ENCODE measurements at regions of chr12 and their contacts with region 1.

Region 1: GRCh38 chr12:52050761-52051541 is at the start of gene NR4A1:
- DNase-seq: peak; percentile 96
- H3K4me3 ChIP-seq: peak within 1 kb of the TSS; percentile 32 to 46 (median 44)
- H3K27ac ChIP-seq: peak within 1 kb of the TSS; percentile 85
- H3K4me1 ChIP-seq: peaks cover 20% of the 10 kb centered on the region
- H3K27me3 ChIP-seq: no peaks in the 10 kb centered on the region
- CTCF ChIP-seq: peak; percentile 5 to 10
- POLR2A ChIP-seq: no peak
- total RNA-seq, gene NR4A1: 6.8 and 10.2 TPM in 2 replicates

Region 2: DNA sequence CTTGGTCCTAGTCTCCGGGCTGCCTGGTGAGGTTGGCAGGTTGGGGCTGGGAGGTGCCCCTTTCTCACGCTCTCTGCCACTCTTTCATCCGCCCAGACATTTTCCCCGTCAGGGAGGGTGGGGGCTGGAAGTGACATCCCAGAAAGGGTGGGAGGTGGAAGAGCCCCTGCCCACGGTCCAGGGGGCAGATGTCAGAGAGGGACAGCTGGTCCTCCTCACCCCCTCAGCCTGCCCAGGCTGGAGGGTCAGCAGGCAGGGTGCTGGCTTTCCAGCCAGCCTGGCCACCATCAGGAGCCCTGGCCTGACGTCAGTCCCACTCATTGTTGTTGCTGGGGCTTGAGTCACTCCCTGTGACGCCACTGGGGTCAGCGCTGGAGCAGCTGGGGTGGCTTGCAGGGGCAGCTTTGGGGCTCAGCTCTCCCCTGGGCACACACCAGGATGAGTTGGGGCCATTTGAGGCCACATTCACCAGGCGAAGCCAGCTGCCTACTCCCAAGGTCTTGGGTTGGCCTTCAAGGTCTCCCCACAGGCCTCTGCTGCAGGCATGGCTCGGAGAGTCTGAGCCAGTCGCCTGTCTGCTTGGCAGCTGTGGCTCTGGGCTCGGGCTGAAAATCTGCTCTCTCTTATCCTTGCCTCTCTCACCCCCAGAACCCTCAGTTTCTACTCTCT is 13.2 kb after region 1 on chr12:
- CTCF ChIA-PET with region 1: interaction called, 7 read pairs
- POLR2A ChIA-PET with region 1: no interaction called
- dilution Hi-C with region 1: no loop called
- intact Hi-C with region 1: loop called (anchors 1 kb)
- DNase-seq: peak; percentile 73
- H3K4me3 ChIP-seq: no peak overlapping the region
- H3K27ac ChIP-seq: peak overlapping the region; percentile 83
- H3K4me1 ChIP-seq: peaks cover 9% of the 10 kb centered on the region
- H3K27me3 ChIP-seq: no peaks in the 10 kb centered on the region
- CTCF ChIP-seq: no peak
- POLR2A ChIP-seq: no peak

Region 3: GRCh38 chr12:52121824-52122539 is 71.0 kb after region 1 on chr12:
- CTCF ChIA-PET with region 1: no interaction called
- POLR2A ChIA-PET with region 1: no interaction called
- dilution Hi-C with region 1: no loop called
- intact Hi-C with region 1: no loop called
- DNase-seq: peak; percentile 33
- H3K4me3 ChIP-seq: no peak overlapping the region
- H3K27ac ChIP-seq: no peak overlapping the region
- H3K4me1 ChIP-seq: peaks cover 21% of the 10 kb centered on the region
- H3K27me3 ChIP-seq: peaks cover 0 to 1% of the 10 kb centered on the region in 2 experiments
- CTCF ChIP-seq: peak; percentile 58 to 87
- POLR2A ChIP-seq: no peak

Measured in endothelial cell of umbilical vein (primary cell).